PC-9 (cell line): ENCODE measurements at regions of chr2 and their contacts with region 1.

Region 1: DNA sequence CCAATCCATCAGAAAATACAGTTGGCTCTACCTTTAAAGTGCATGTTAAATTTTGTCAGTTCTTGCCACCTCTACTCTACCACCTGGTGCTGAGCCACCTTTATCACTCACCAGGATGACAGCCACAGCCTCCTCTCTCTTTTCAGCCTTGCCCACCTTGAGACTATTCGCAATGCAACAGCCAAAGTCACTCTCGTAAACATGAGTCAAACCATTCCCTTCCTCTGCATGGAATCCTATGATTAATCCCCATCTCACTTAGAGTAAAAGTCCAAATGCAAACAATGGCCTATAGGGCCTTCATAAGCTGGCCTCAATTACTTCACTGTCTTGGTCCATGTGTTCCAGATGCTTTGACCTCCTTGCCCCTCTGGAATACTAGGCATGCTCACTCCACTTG is 5.8 kb upstream of the OSBPL6 start:
- DNase-seq: no peak
- H3K4me3 ChIP-seq: no peak overlapping the region
- H3K27ac ChIP-seq: no peak overlapping the region
- H3K4me1 ChIP-seq: 0 out of 2 replicates have a peak, but pooled peaks cover 4% of the 10 kb centered on the region
- H3K27me3 ChIP-seq: peaks cover 18% of the 10 kb centered on the region; the same call in 1 of the 2 replicates
- CTCF ChIP-seq: no peak

Region 2: DNA sequence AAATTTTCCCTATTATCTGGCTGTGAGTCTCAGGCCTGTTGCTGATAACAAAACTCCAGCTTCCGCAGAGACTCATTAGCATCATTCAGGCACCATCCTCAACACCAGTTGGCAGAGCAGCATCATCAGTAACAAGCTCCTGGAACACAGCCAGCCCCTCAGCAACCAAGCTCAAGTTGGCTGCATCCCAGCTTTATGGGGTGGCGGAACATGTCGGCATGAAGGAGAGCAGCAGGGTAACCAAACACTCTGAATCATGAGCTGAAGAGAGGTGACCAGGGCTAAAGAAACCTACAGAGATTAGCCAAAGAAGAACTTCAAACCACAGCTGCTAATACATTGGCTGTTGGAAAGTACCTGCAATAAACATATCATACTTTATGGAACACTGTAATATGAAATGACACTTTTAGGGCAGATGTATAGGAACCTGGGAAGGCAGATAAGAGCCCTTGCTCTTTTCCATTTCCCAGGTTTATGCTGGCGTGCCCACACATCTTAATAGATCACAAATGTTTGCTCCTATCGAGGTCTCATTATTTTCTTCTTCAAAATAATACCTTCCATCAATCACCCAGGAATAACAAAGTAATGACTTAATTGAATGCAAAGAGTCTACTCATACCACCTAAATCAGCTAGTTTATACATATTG is 179.7 kb before region 1 on chr2:
- CTCF ChIA-PET with region 1: no interaction called
- POLR2A ChIA-PET with region 1: no interaction called
- intact Hi-C with region 1: no loop called
- DNase-seq: peak in 1 of 2 experiments; percentile 31
- H3K4me3 ChIP-seq: no peak overlapping the region
- H3K27ac ChIP-seq: no peak overlapping the region
- H3K4me1 ChIP-seq: no peaks in the 10 kb centered on the region
- H3K27me3 ChIP-seq: no peaks in the 10 kb centered on the region
- CTCF ChIP-seq: no peak

Region 3: GRCh38 chr2:178142274-178143065 is 46.0 kb before region 1 on chr2:
- CTCF ChIA-PET with region 1: no interaction called
- POLR2A ChIA-PET with region 1: interaction called, 17 read pairs
- intact Hi-C with region 1: no loop called
- DNase-seq: no peak
- H3K4me3 ChIP-seq: no peak overlapping the region
- H3K27ac ChIP-seq: no peak overlapping the region
- H3K4me1 ChIP-seq: no peaks in the 10 kb centered on the region
- H3K27me3 ChIP-seq: no peaks in the 10 kb centered on the region
- CTCF ChIP-seq: no peak

Region 4: GRCh38 chr2:178152033-178152432 is 36.4 kb before region 1 on chr2:
- CTCF ChIA-PET with region 1: interaction called, 5 read pairs
- POLR2A ChIA-PET with region 1: no interaction called
- intact Hi-C with region 1: loop called (anchors 2 kb)
- DNase-seq: no peak
- H3K4me3 ChIP-seq: no peak overlapping the region
- H3K27ac ChIP-seq: no peak overlapping the region
- H3K4me1 ChIP-seq: no peaks in the 10 kb centered on the region
- H3K27me3 ChIP-seq: no peaks in the 10 kb centered on the region
- CTCF ChIP-seq: no peak